ENCODE measurements at regions of chr18 and their contacts with region 1.

Region 1: GRCh38 chr18:43620936-43621335 is 343.6 kb upstream of the SYT4 start:
- DNase-seq: peak; percentile 50
- ATAC-seq: no peak
- H3K4me3 ChIP-seq: no peak overlapping the region
- H3K27ac ChIP-seq: no peak overlapping the region
- H3K4me1 ChIP-seq: no peaks in the 10 kb centered on the region
- H3K27me3 ChIP-seq: no peaks in the 10 kb centered on the region
- CTCF ChIP-seq: peak; percentile 43; the same call in 1 of the 2 replicates

Region 2: DNA sequence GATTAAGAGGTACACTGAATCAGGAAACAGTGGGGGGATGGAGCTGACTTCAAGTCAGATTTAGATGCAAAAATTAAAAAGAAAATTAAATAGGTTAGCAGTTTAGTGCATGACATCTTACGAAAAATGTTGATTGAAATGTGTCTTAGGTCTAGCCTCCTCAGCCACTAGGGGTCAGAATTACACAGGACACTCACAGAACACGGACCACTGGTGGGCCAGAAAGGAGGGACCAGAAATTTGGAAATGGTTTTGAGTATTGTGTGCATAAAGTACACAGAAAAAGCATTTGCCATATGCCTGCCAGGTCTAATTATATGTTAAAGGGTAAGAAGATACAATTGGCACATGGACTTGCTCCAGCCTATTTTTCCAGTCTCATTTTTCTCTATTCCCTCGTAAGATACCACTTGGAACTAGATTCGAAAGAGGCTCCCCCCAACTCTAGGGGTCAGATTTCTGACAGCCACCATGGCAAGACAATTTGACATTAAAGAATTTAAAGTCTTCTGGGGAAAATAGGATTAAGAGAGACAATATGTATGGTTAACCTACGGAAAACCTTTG is 509.5 kb after region 1 on chr18:
- CTCF ChIA-PET with region 1: no interaction called
- POLR2A ChIA-PET with region 1: no interaction called
- intact Hi-C with region 1: loop called (anchors 2 kb)
- DNase-seq: peak; percentile 49
- ATAC-seq: peak; percentile 65
- H3K4me3 ChIP-seq: no peak overlapping the region
- H3K27ac ChIP-seq: no peak overlapping the region
- H3K4me1 ChIP-seq: 0 out of 2 replicates have a peak, but pooled peaks cover 5% of the 10 kb centered on the region
- H3K27me3 ChIP-seq: no peaks in the 10 kb centered on the region
- CTCF ChIP-seq: peak; percentile 69